Activated CD8-positive, alpha-beta T cell treated with anti-CD3 and anti-CD28 coated beads for 36 hours (primary cell): ENCODE measurements at regions of chr10 and their contacts with region 1.

Region 1: DNA sequence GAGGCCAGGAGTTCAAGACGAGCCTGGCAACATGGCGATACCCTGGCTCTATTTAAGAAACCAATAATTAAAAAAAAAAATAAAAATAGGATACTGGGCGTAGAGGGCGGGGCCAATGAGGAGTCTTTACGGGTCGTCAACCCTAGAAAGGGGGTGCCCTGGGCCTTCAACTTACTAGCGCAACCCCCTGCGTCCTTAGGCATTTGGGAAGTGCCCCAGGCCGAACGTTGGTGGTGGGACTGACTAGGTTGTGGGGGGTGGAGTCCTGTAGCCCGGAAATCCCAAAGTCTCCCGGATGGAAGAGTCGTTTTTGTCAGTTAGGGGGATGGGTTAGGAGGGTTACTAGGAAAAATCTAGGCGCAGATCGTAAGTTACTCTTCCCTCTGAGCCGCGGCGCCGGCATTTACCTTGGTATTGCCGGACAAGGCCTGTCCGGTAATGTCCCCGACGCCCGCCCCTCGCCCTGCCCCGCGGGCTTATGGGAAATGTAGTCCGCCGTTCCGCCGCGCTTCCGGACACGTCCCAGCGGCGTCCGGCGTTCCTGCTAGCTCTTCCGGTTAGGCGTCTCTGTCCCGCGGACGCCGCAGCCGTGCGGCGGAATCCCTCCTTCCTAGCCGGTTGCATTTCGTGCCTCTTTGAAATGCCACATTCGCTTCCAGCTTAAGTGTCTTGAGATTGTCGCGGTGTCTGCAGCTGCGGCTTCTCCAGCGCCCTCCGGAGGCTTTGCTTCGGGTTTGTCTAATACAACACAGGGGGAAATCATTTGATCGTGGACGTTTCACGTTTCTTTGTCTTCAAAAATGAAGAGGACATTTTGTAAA is 1.3 kb upstream of the ACBD5 start:
- DNase-seq: peak; percentile 91
- ATAC-seq: peak; percentile 78
- H3K4me3 Mint-ChIP-seq: peak overlapping the region; percentile 94
- H3K27ac Mint-ChIP-seq: peak overlapping the region; percentile 99
- H3K4me1 Mint-ChIP-seq: peaks cover 19% of the 10 kb centered on the region
- H3K27me3 Mint-ChIP-seq: no peaks in the 10 kb centered on the region
- CTCF ChIP-seq: peak; percentile 37

Region 2: GRCh38 chr10:27099916-27100812 is 141.7 kb before region 1 on chr10 and contains the start of gene ANKRD26:
- CTCF ChIA-PET with region 1: no interaction called
- POLR2A ChIA-PET with region 1: interaction called, 3 read pairs
- intact Hi-C with region 1: loop called (anchors 5 kb)
- DNase-seq: peak; percentile 98
- ATAC-seq: peak; percentile 57
- H3K4me3 Mint-ChIP-seq: peak within 1 kb of the TSS; percentile 91
- H3K27ac Mint-ChIP-seq: peak within 1 kb of the TSS; percentile 93
- H3K4me1 Mint-ChIP-seq: peaks cover 42% of the 10 kb centered on the region
- H3K27me3 Mint-ChIP-seq: peaks cover 1% of the 10 kb centered on the region
- CTCF ChIP-seq: no peak
- total RNA-seq, gene ANKRD26: 8.3 to 10.4 TPM

Region 3: GRCh38 chr10:27155066-27155754 is 86.7 kb before region 1 on chr10 and contains the start of gene MASTL:
- CTCF ChIA-PET with region 1: interaction called, 4 read pairs
- POLR2A ChIA-PET with region 1: interaction called, 38 read pairs
- intact Hi-C with region 1: loop called (anchors 1 kb)
- DNase-seq: peak; percentile 97
- ATAC-seq: peak; percentile 78
- H3K4me3 Mint-ChIP-seq: peak within 1 kb of the TSS; percentile 91
- H3K27ac Mint-ChIP-seq: peak within 1 kb of the TSS; percentile 100
- H3K4me1 Mint-ChIP-seq: peaks cover 32% of the 10 kb centered on the region
- H3K27me3 Mint-ChIP-seq: no peaks in the 10 kb centered on the region
- CTCF ChIP-seq: no peak
- total RNA-seq, gene MASTL: 40.5 to 43.6 TPM

Region 4: DNA sequence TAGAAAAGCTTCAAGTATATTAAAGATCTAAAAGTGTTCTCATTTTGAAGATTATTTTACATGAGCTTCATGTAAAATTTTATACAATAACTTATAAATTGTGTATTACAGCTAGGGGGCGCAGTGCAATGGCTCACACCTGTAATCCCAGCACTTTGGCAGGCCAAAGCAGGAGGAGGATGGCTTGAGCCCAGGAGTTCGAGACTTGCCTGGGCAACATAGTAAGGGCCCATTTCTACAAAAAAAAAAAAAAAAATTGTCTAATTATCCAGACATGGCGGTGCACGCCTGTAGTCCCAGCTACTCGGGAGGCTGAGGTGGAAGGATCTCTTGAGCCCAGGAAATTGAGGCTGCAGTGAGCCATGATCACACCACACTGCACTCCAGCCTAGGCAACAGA is 17.9 kb before region 1 on chr10:
- CTCF ChIA-PET with region 1: interaction called, 41 read pairs
- POLR2A ChIA-PET with region 1: interaction called, 4 read pairs
- intact Hi-C with region 1: no loop called
- DNase-seq: peak; percentile 64
- ATAC-seq: peak; percentile 55
- H3K4me3 Mint-ChIP-seq: no peak overlapping the region
- H3K27ac Mint-ChIP-seq: no peak overlapping the region
- H3K4me1 Mint-ChIP-seq: peaks cover 19% of the 10 kb centered on the region
- H3K27me3 Mint-ChIP-seq: no peaks in the 10 kb centered on the region
- CTCF ChIP-seq: peak; percentile 76

Region 5: GRCh38 chr10:27252267-27253000 is 10.6 kb after region 1 on chr10:
- CTCF ChIA-PET with region 1: interaction called, 13 read pairs
- POLR2A ChIA-PET with region 1: interaction called, 29 read pairs
- intact Hi-C with region 1: no loop called
- DNase-seq: peak; percentile 88
- ATAC-seq: peak; percentile 95
- H3K4me3 Mint-ChIP-seq: peak overlapping the region; percentile 75
- H3K27ac Mint-ChIP-seq: peak overlapping the region; percentile 86
- H3K4me1 Mint-ChIP-seq: peaks cover 15% of the 10 kb centered on the region
- H3K27me3 Mint-ChIP-seq: peaks cover 3% of the 10 kb centered on the region
- CTCF ChIP-seq: peak; percentile 89

Region 6: GRCh38 chr10:27258838-27259812 is 17.3 kb after region 1 on chr10:
- CTCF ChIA-PET with region 1: no interaction called
- POLR2A ChIA-PET with region 1: interaction called, 29 read pairs
- intact Hi-C with region 1: no loop called
- DNase-seq: peak; percentile 40
- ATAC-seq: peak; percentile 70
- H3K4me3 Mint-ChIP-seq: peak overlapping the region; percentile 72
- H3K27ac Mint-ChIP-seq: no peak overlapping the region
- H3K4me1 Mint-ChIP-seq: peaks cover 23% of the 10 kb centered on the region
- H3K27me3 Mint-ChIP-seq: peaks cover 29% of the 10 kb centered on the region
- CTCF ChIP-seq: no peak